ENCODE measurements at regions of chr1 and their contacts with region 1.

Region 1: GRCh38 chr1:18913065-18913835 is 10.9 kb upstream of the ALDH4A1 start:
- DNase-seq: peak; percentile 66
- ATAC-seq: peak; percentile 97
- H3K4me3 ChIP-seq: no peak overlapping the region
- H3K27ac ChIP-seq: no peak overlapping the region
- H3K4me1 ChIP-seq: peaks cover 13% of the 10 kb centered on the region
- H3K27me3 ChIP-seq: no peaks in the 10 kb centered on the region
- CTCF ChIP-seq: peak; percentile 100
- EP300 ChIP-seq: no peak
- POLR2A ChIP-seq: no peak
- RAD21 ChIP-seq: peak; percentile 98

Region 2: DNA sequence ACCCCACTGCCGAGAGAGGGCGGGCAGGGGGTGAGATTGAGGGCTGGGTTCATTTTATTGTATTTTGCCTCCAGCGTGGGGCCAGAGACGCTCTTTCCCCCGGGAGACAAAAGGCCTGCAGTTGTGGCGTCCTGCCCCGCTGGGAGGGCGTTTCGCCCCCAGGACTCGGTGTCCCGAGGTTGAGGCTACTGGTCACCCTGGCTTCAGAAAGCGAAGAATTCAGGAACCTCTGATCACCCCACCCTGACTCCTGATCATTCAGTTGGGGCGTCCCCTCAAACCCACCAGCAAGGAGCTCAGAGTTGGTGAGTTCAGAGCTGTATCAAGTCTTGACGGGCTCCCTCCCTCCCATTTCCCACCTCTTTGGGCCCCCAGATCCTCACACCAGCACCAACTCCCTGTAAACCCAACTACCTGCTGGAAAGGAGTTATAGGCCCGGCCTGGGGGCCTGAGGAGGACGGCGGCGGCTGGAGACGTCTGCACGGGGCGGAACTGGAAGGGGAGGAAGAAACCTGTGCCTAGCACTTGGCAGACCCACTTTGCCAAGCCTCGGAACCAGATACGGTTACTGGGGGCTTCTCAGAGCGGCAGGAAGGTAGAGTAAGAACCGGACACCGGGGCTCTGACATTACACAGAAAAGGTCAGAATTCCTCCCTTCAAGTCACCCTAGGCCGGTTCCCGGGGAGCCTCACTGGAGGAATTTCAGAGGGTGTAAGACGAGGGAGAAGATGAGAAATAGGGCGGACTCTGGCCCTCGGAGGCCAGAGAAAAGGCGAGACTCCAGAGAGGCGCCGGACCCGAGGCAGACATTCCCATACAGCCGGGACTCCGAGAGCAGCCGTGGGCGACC is 283.4 kb before region 1 on chr1:
- CTCF ChIA-PET with region 1: no interaction called
- POLR2A ChIA-PET with region 1: no interaction called
- in situ Hi-C with region 1: no loop called
- intact Hi-C with region 1: no loop called
- DNase-seq: no peak
- ATAC-seq: no peak
- H3K4me3 ChIP-seq: no peak overlapping the region
- H3K27ac ChIP-seq: no peak overlapping the region
- H3K4me1 ChIP-seq: no peaks in the 10 kb centered on the region
- H3K27me3 ChIP-seq: peaks cover 9 to 89% of the 10 kb centered on the region in 2 experiments
- CTCF ChIP-seq: no peak
- EP300 ChIP-seq: no peak
- POLR2A ChIP-seq: no peak
- RAD21 ChIP-seq: no peak

Region 3: GRCh38 chr1:18883636-18884418 is 29.4 kb before region 1 on chr1:
- CTCF ChIA-PET with region 1: interaction called, 29 read pairs
- POLR2A ChIA-PET with region 1: no interaction called
- in situ Hi-C with region 1: no loop called
- intact Hi-C with region 1: loop called (anchors 1 kb)
- DNase-seq: peak; percentile 51
- ATAC-seq: peak; percentile 79
- H3K4me3 ChIP-seq: no peak overlapping the region
- H3K27ac ChIP-seq: no peak overlapping the region
- H3K4me1 ChIP-seq: no peaks in the 10 kb centered on the region
- H3K27me3 ChIP-seq: no peaks in the 10 kb centered on the region
- CTCF ChIP-seq: peak; percentile 88
- EP300 ChIP-seq: no peak
- POLR2A ChIP-seq: no peak
- RAD21 ChIP-seq: peak; percentile 89

Region 4: DNA sequence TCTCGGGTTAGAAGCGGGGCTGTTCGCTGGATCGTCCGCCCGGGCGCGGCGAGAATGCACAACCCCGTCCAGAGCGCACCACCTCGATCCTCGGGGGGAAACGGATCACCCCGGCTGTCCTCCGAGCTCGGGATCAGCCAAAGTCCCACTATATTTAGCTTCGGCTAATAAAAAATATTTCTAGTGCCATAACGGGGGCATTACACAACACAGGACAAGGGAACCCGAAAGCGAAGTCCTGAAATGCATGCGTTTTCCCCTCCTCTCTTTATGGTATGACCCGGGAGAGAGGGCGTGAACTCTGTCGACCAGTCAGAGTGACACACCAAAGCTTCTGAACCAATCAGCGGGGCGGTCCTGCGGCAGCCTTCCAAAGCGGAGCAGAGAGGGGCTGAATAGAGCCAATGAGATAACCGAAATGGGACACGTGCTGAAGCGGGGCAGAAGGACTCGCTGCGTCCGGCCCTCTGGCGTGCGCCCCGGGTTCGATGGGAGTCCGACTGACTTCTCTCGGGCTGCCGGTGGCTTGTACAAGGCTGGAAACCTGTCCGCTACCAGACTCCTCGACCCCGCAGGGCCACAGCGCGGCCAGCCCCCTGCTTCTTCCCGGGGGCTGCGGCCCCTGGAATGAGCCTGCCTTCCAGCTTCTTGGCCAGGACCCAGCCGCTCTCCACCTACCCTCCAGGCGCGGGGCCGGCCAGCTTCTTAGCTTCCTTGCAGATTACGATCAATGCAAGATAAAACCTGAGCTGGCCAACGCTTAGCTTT is 10.5 kb before region 1 on chr1 and contains the start of gene ALDH4A1:
- CTCF ChIA-PET with region 1: interaction called, 6 read pairs
- POLR2A ChIA-PET with region 1: interaction called, 12 read pairs
- in situ Hi-C with region 1: no loop called
- intact Hi-C with region 1: no loop called
- DNase-seq: peak; percentile 98
- ATAC-seq: peak; percentile 89
- H3K4me3 ChIP-seq: peak within 1 kb of the TSS; percentile 81 to 95 (median 94)
- H3K27ac ChIP-seq: peak within 1 kb of the TSS; percentile 95
- H3K4me1 ChIP-seq: peaks cover 45% of the 10 kb centered on the region
- H3K27me3 ChIP-seq: no peaks in the 10 kb centered on the region
- CTCF ChIP-seq: peak; percentile 47
- EP300 ChIP-seq: no peak
- POLR2A ChIP-seq: peak; percentile 75 to 77
- RAD21 ChIP-seq: 0 out of 2 replicates have a peak, but pooled peaks have one; percentile 7
- total RNA-seq, gene ALDH4A1: 58.5 and 76.4 TPM in 2 replicates

Region 5: DNA sequence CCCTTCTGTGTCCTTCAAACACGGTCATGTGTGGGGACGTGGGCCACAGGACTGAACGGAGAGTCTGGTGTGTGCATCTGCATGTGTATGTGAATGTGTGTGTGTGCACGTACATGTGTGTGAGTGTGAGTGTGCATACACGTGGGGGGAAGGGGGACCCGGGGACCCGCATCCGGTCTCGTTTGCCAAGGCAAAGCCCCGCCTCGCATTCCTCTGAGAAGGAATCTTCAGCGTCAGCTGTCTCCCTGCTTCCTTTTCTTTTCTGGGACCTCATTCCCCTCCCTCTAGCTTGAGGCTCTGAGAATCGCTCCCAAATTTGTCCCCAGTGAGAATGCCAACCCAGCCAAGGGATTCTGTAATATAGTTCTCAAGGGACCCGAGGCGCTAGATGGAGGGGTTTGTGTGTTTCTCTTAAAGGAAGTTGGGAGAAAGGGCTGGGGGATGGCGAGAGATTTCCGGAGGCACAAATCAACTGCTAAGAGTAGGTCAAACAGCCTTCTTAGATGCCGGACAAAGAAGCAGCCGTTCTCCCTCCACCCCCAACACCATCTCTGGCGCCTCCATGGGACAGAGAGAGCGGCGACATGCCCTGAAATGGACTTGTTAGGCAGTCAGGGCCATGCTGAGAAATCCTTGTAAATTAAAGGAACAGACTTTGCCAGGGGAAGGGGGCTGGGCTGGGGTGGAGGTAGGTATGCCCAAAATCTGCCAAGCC is 36.6 kb after region 1 on chr1:
- CTCF ChIA-PET with region 1: interaction called, 14 read pairs
- POLR2A ChIA-PET with region 1: interaction called, 5 read pairs
- in situ Hi-C with region 1: loop called (anchors 5 kb)
- intact Hi-C with region 1: no loop called
- DNase-seq: peak; percentile 48
- ATAC-seq: peak; percentile 54
- H3K4me3 ChIP-seq: peak overlapping the region; percentile 53 to 75 (median 73)
- H3K27ac ChIP-seq: peak overlapping the region; percentile 93
- H3K4me1 ChIP-seq: peaks cover 95% of the 10 kb centered on the region
- H3K27me3 ChIP-seq: no peaks in the 10 kb centered on the region
- CTCF ChIP-seq: peak; percentile 45
- EP300 ChIP-seq: no peak
- POLR2A ChIP-seq: no peak
- RAD21 ChIP-seq: no peak; the same call in 1 of the 2 replicates

Region 6: DNA sequence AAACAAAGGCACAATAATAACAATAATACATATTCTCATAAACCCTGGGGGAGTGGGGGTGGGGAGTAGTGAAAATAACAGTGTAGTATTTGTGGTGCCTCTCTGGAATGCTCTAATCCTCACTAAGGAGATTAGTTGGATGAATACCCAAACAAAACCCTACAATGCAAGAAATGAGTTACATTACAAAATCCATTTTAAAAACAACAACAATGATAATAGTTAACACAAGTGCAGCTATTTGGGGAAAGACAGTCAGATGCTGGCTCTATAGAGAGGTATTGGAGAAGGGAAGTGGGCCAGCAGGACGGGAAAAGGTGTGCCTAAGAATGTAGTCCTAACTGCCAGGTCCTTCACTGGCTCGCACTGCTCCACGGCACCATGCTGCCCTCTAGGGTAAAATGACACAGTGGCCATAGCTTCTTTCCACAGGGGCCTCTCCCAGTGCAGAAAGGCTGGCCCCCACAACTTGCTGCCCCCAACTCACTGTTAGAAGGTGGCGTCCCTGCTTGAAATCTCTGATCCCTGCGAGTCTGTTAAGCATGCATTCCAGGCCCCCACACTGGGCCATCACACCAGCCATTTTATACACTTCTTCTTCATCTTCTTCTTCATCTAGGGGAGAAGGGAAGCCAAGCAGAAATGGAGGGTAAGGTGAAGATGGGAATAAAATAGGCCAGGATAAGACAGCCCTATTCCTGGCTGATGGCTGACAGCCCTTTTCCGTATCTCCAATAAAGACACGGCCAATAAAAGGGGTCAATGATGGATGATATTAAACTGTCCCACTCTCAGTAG is 183.0 kb after region 1 on chr1:
- CTCF ChIA-PET with region 1: interaction called, 8 read pairs
- POLR2A ChIA-PET with region 1: no interaction called
- in situ Hi-C with region 1: no loop called
- intact Hi-C with region 1: loop called (anchors 5 kb)
- DNase-seq: peak; percentile 24
- ATAC-seq: peak; percentile 88
- H3K4me3 ChIP-seq: no peak overlapping the region
- H3K27ac ChIP-seq: no peak overlapping the region
- H3K4me1 ChIP-seq: no peaks in the 10 kb centered on the region
- H3K27me3 ChIP-seq: no peaks in the 10 kb centered on the region
- CTCF ChIP-seq: peak; percentile 80
- EP300 ChIP-seq: no peak
- POLR2A ChIP-seq: no peak
- RAD21 ChIP-seq: peak; percentile 48; the same call in 1 of the 2 replicates

Region 7: DNA sequence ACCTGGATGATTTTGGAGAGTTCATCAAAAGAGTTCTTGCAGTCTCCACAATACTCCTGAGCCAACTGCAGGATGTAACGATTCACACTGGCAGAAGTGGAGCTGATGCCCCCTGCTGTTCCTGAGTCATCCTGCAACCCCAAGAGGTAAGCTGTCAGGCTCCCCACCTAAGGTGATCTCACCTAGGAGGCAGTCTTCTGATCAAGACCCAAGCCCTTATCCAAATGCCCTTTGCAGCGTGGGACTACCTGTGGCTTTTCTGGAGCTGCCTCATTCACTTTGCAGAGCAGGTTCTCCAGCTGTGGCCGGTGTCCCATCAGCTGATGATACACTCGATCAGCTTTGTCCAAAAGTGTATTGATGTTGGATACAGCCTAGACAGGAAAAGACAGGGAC is 200.4 kb after region 1 on chr1:
- CTCF ChIA-PET with region 1: interaction called, 11 read pairs
- POLR2A ChIA-PET with region 1: no interaction called
- in situ Hi-C with region 1: no loop called
- intact Hi-C with region 1: no loop called
- DNase-seq: peak; percentile 46
- ATAC-seq: peak; percentile 89
- H3K4me3 ChIP-seq: no peak overlapping the region
- H3K27ac ChIP-seq: no peak overlapping the region
- H3K4me1 ChIP-seq: no peaks in the 10 kb centered on the region
- H3K27me3 ChIP-seq: no peaks in the 10 kb centered on the region
- CTCF ChIP-seq: peak; percentile 77
- EP300 ChIP-seq: no peak
- POLR2A ChIP-seq: no peak
- RAD21 ChIP-seq: peak; percentile 42; the same call in 1 of the 2 replicates

Measured in HepG2 (cell line).